ENCODE measurements at regions of chr12 and their contacts with region 1.

Region 1: GRCh38 chr12:96516472-96517430 is 27.4 kb downstream of the CFAP54 start:
- DNase-seq: peak; percentile 92
- H3K4me3 Mint-ChIP-seq: peak overlapping the region; percentile 24
- H3K27ac Mint-ChIP-seq: peak overlapping the region; percentile 74
- H3K4me1 Mint-ChIP-seq: peaks cover 21% of the 10 kb centered on the region
- H3K27me3 Mint-ChIP-seq: peaks cover 2% of the 10 kb centered on the region

Region 2: DNA sequence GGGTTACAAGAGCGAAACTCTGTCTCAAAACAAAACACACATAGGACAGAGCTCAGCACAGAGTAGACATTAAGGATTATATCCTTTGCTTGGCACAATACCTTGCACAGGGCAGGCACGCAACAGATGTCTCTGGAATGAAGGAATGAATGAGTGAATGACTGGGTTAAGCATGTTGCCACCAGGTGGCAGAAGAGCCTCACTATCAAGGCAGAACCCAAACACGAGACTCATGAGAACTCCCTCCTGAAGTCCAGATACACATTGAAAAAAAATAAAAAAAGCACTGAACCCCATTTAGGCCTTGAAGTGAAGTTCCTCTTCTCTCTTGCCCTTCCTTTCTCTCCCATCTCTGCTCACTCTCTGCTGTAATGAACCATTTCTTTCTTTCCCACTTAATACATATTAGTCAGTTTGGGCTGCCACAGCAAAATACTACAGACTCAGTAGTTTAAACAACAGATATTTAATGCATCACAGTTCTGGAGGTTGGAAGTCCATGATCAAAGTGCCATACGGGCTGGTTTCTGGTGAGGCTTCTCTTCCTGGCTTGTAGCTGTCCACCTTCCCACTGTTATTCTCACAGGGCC is 454.8 kb before region 1 on chr12:
- CTCF ChIA-PET with region 1: interaction called, 18 read pairs
- POLR2A ChIA-PET with region 1: interaction called, 3 read pairs
- DNase-seq: peak; percentile 83
- H3K4me3 Mint-ChIP-seq: no peak overlapping the region
- H3K27ac Mint-ChIP-seq: no peak overlapping the region
- H3K4me1 Mint-ChIP-seq: peaks cover 26% of the 10 kb centered on the region
- H3K27me3 Mint-ChIP-seq: no peaks in the 10 kb centered on the region

Region 3: DNA sequence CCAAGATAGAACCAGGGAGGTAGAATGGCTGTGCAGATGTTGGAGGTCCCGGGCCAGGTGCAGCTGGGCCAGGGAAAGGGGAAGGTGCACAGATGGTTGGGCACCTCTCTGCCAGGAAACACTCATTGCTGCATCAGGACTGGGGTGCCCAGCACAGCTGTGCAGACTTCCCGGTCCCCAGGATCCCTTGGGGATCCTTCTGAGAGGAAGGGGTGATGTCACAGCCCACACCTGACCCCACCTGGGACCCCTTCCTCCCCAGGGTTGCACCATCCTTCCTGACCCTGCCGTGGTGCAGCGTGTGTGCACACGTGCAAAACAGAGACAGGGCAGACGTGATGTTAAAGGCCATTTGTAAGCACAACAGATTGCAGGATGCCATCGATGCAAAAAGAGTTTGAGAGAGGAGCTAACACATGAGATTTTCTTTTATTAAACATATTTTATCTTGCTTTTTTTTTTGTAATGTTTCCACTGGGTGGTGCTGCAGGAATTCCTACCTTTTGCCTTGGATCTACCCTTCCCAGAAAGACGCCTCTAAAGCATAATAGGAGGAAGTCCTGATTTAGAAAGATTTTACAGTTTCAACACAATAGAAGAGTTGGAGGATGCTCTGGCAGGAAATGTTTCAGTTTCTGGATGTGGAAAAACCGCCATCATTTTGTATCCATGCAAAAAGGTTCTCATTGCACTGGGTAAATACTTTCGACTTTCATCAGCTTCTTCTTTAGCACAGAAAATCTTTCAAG is 307.8 kb before region 1 on chr12:
- CTCF ChIA-PET with region 1: interaction called, 100 read pairs
- POLR2A ChIA-PET with region 1: interaction called, 5 read pairs
- DNase-seq: no peak
- H3K4me3 Mint-ChIP-seq: peak overlapping the region; percentile 40
- H3K27ac Mint-ChIP-seq: peak overlapping the region; percentile 90
- H3K4me1 Mint-ChIP-seq: peaks cover 99% of the 10 kb centered on the region
- H3K27me3 Mint-ChIP-seq: no peaks in the 10 kb centered on the region

Region 4: DNA sequence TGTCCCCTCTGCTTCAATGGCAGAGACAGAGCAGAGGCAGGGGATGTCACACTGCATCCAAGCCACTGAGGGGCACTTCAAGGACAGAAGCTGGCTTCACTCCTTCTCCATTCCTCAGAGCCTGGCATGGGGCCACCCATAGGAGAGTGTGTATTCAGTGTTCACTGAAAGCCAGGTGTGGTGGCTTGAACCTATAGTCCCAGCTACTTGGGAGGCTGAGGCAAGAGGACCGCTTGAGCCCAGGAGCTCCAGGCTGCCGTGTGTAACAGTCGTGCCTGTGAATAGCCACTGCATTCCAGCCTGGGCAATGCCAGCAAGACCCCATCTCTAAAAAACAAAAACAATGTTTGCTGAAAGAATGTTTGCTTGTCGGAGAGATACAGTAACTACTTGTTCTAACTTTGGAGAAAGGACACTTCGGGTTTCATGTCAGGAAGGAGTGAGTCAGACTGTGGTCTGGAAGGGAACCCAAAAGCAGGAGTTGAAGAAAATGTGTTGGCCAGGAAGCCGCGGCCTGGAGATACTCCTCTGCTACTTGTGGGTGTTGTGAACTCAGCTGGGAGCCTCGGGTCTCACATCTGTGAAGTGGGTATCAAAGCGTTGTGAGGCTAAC is 279.2 kb before region 1 on chr12:
- CTCF ChIA-PET with region 1: interaction called, 13 read pairs
- POLR2A ChIA-PET with region 1: interaction called, 4 read pairs
- DNase-seq: peak; percentile 68
- H3K4me3 Mint-ChIP-seq: peak overlapping the region; percentile 39
- H3K27ac Mint-ChIP-seq: peak overlapping the region; percentile 56
- H3K4me1 Mint-ChIP-seq: peaks cover 80% of the 10 kb centered on the region
- H3K27me3 Mint-ChIP-seq: no peaks in the 10 kb centered on the region

Region 5: GRCh38 chr12:96489103-96490056 is 27.4 kb before region 1 on chr12 and contains the start of gene CFAP54:
- CTCF ChIA-PET with region 1: interaction called, 49 read pairs
- POLR2A ChIA-PET with region 1: interaction called, 7 read pairs
- DNase-seq: peak; percentile 96
- H3K4me3 Mint-ChIP-seq: peak within 1 kb of the TSS; percentile 80
- H3K27ac Mint-ChIP-seq: peak within 1 kb of the TSS; percentile 7
- H3K4me1 Mint-ChIP-seq: peaks cover 49% of the 10 kb centered on the region
- H3K27me3 Mint-ChIP-seq: peaks cover 16% of the 10 kb centered on the region
- total RNA-seq, gene CFAP54: 0.55 to 0.75 TPM

Region 6: DNA sequence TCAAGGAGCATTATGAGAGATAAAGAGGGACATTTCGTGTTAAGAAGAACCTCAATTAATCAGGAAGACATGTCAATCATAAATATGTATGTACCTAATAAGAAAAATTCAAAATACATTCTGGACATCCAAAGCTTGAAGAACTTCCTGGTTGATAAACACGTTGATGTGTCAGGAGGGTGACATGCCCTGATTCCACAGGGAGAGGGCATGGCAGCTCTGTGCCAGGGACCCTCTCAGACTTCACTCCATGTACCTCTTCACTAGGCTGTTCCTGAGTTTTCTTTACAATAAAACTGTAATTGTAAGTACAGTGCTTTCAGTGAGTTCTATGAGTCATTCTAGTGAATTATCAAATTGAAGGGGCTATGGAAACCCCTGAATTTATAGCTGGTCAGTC is 136.1 kb after region 1 on chr12:
- CTCF ChIA-PET with region 1: no interaction called
- POLR2A ChIA-PET with region 1: no interaction called
- DNase-seq: no peak
- H3K4me3 Mint-ChIP-seq: no peak overlapping the region
- H3K27ac Mint-ChIP-seq: no peak overlapping the region
- H3K4me1 Mint-ChIP-seq: no peaks in the 10 kb centered on the region
- H3K27me3 Mint-ChIP-seq: peaks cover 3% of the 10 kb centered on the region

Measured in activated CD4-positive, alpha-beta memory T cell treated with anti-CD3 and anti-CD28 coated beads, Interleukin-2, amount 10 ng/mL, durations not matched to agents 7 days and 5 days (primary cell).